Mammary epithelial cell (primary cell): ENCODE measurements at regions of chr3 and their contacts with region 1.

Region 1: DNA sequence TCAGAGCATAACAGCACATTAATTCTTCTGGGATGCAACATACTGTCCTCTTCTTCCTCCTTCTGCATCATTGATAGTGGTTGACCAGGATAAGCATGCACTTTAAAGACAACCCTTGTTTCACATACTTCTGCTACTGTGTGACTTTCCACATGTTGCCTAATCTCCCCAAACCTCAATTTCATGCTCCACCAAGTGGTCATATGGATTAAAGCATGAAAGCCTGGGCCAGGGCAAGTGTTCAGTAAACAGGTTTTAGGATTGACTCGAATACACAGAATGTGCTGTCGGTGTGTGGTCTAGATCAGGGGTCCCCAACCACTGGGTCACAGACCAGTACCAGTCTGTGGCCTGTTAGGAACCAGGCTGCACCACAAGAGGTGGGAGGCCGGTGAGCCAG is 22.5 kb upstream of the BFSP2 start:
- DNase-seq: peak; percentile 42
- H3K4me3 ChIP-seq: no peak overlapping the region
- H3K27ac ChIP-seq: no peak overlapping the region
- H3K4me1 ChIP-seq: no peaks in the 10 kb centered on the region
- H3K27me3 ChIP-seq: peaks cover 2% of the 10 kb centered on the region
- CTCF ChIP-seq: peak; percentile 48 to 68

Region 2: GRCh38 chr3:133040696-133041523 is 336.5 kb before region 1 on chr3:
- CTCF ChIA-PET with region 1: interaction called, 3 read pairs
- dilution Hi-C with region 1: no loop called
- in situ Hi-C with region 1: loop called (anchors 10 kb)
- intact Hi-C with region 1: loop called (anchors 1 kb)
- DNase-seq: peak; percentile 44
- H3K4me3 ChIP-seq: no peak overlapping the region
- H3K27ac ChIP-seq: no peak overlapping the region
- H3K4me1 ChIP-seq: peaks cover 10% of the 10 kb centered on the region
- H3K27me3 ChIP-seq: peaks cover 19% of the 10 kb centered on the region
- CTCF ChIP-seq: peak; percentile 74 to 86